ENCODE measurements at regions of chr9 and their contacts with region 1.

Region 1: GRCh38 chr9:7094052-7094451 is 336.3 kb downstream of the KDM4C start:
- DNase-seq: no peak
- H3K4me3 Mint-ChIP-seq: no peak overlapping the region
- H3K27ac Mint-ChIP-seq: no peak overlapping the region
- H3K4me1 Mint-ChIP-seq: peaks cover 2% of the 10 kb centered on the region
- H3K27me3 Mint-ChIP-seq: no peaks in the 10 kb centered on the region

Region 2: GRCh38 chr9:7150153-7150890 is 56.3 kb after region 1 on chr9:
- intact Hi-C with region 1: loop called (anchors 10 kb)
- DNase-seq: peak; percentile 81
- H3K4me3 Mint-ChIP-seq: peak overlapping the region; percentile 59
- H3K27ac Mint-ChIP-seq: peak overlapping the region; percentile 73
- H3K4me1 Mint-ChIP-seq: peaks cover 24% of the 10 kb centered on the region
- H3K27me3 Mint-ChIP-seq: no peaks in the 10 kb centered on the region